Sciatic nerve (tissue), 2 donors: ENCODE measurements at regions of chr1 and their contacts with region 1.

Region 1: GRCh38 chr1:21669258-21670058 is at the start of gene RAP1GAP:
- DNase-seq: no peak
- ATAC-seq: peak; percentile 4
- total RNA-seq, gene RAP1GAP: 14.7 TPM

Region 2: GRCh38 chr1:21703318-21703963 is 34.0 kb after region 1 on chr1:
- intact Hi-C with region 1: no loop called
- DNase-seq: no peak
- ATAC-seq: no peak

Region 3: DNA sequence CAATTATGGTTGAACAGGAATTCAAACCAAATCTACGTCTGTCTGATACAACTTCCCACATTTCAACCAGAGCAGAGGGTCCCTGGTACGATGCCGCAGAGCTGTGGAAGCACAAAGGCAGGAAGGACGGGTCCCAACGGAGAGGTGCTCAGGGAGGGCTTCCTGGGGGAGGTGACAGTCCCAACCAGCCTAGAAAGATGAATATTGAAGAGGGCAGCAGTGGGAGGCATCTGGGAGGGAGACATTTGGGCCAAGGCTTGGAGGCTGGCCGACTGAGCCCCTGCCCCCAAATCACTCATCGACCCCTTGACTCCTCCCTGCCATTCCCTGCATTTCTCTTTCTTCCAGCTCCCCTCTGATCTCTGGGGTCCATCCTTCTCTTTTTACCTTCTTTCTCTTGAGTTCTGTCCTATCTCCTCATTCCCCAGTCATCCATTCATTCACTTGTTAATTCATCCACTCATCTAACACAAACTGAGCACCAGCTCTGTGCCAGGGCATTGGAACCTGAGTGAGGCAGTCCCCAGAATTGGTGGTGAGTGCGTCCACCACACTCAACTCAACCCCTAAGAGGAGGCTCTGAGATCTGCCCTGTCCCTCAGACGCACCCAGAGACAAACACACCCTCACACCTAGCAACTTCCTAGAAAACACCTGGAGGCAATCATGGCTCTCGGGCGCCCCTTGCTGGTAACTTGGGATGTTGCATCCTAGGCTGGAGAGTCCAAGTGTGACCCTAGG is 294.2 kb after region 1 on chr1:
- intact Hi-C with region 1: loop called (anchors 10 kb)
- DNase-seq: peak; percentile 89
- ATAC-seq: peak; percentile 89